Activated T-helper 1 cell treated with anti-CD3 and anti-CD28 coated beads, Interleukin-12 subunit alpha, Interleukin-12 subunit beta, Interleukin-2, Interleukin-4 antibody, amounts not matched to agents 30 ng/mL and 10 ng/mL and 1 ng/mL, durations not matched to agents 14 hours and 24 hours and 36 hours (primary cell): ENCODE measurements at regions of chr9 and their contacts with region 1.

Region 1: GRCh38 chr9:114348906-114349482 is 19.3 kb downstream of the ORM2 start:
- DNase-seq: peak; percentile 62
- H3K4me3 Mint-ChIP-seq: peak overlapping the region; percentile 72
- H3K27ac Mint-ChIP-seq: peak overlapping the region; percentile 97
- H3K4me1 Mint-ChIP-seq: peaks cover 56% of the 10 kb centered on the region
- H3K27me3 Mint-ChIP-seq: no peaks in the 10 kb centered on the region

Region 2: GRCh38 chr9:114366334-114367128 is 17.5 kb after region 1 on chr9:
- intact Hi-C with region 1: loop called (anchors 1 kb)
- DNase-seq: peak; percentile 38
- H3K4me3 Mint-ChIP-seq: peak overlapping the region; percentile 53
- H3K27ac Mint-ChIP-seq: peak overlapping the region; percentile 97
- H3K4me1 Mint-ChIP-seq: peaks cover 77% of the 10 kb centered on the region
- H3K27me3 Mint-ChIP-seq: no peaks in the 10 kb centered on the region

Region 3: DNA sequence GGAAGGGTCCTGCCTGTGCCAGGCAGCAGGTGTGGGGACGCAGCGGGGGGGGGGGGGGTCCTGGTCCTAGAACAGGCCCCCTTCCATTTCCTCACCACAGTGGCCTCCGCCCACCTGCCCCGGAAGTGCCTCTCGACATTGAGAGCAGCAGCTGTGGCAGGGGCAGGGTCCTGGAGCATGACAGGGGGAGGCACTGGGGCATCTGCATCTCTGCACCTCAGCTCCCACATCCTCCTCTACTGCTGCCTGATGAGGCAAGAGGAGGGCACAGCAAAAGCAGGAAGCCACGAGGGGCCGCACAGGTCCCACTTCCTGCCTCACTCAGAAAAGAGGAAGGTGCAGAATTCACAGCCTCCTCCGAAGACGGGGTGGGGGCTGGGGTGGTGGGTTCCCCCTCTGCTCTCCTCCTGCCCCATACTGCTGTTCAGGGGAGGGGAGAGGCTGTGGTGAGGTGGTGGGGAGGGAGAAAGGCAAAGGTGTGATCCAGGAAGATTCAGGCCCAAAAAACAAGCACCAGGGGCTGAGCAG is 24.0 kb after region 1 on chr9:
- intact Hi-C with region 1: loop called (anchors 1 kb)
- DNase-seq: peak; percentile 83
- H3K4me3 Mint-ChIP-seq: peak overlapping the region; percentile 77
- H3K27ac Mint-ChIP-seq: peak overlapping the region; percentile 92
- H3K4me1 Mint-ChIP-seq: peaks cover 81% of the 10 kb centered on the region
- H3K27me3 Mint-ChIP-seq: no peaks in the 10 kb centered on the region